ENCODE measurements at regions of chr7 and their contacts with region 1.

Region 1: DNA sequence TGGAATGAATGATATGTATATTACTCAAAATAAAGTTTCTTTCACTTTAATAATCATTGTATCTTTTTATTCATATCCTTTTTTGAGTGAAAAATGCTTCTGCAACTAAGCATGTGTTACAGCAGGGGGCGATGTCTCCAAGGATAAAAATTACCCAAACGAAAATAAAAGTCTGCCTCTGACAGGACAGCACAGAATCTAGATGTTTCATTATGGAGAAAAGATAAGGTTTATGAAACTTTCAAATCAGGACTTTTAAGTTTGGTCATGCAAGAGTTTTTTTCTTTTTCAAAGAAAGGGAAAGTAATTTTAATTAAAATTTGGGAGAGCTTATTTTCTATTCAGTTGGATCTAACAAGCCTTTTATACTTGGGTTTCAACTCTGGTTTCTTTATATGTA is 48.4 kb downstream of the TES start:
- DNase-seq: peak; percentile 85
- H3K4me3 ChIP-seq: no peak overlapping the region
- H3K27ac ChIP-seq: peak overlapping the region; percentile 32
- H3K4me1 ChIP-seq: peaks cover 28% of the 10 kb centered on the region
- H3K27me3 ChIP-seq: no peaks in the 10 kb centered on the region
- CTCF ChIP-seq: peak; percentile 43 to 48
- POLR2A ChIP-seq: peak; percentile 22

Region 2: GRCh38 chr7:116271963-116272839 is 13.5 kb after region 1 on chr7:
- CTCF ChIA-PET with region 1: interaction called, 18 read pairs
- POLR2A ChIA-PET with region 1: no interaction called
- dilution Hi-C with region 1: no loop called
- intact Hi-C with region 1: no loop called
- DNase-seq: peak; percentile 94
- H3K4me3 ChIP-seq: peak overlapping the region in 1 of 3 experiments; percentile 48
- H3K27ac ChIP-seq: peak overlapping the region; percentile 90
- H3K4me1 ChIP-seq: peaks cover 57% of the 10 kb centered on the region
- H3K27me3 ChIP-seq: no peaks in the 10 kb centered on the region
- CTCF ChIP-seq: no peak
- POLR2A ChIP-seq: no peak

Region 3: GRCh38 chr7:116327752-116328151 is 69.0 kb after region 1 on chr7:
- CTCF ChIA-PET with region 1: interaction called, 7 read pairs
- POLR2A ChIA-PET with region 1: no interaction called
- dilution Hi-C with region 1: no loop called
- intact Hi-C with region 1: loop called (anchors 1 kb)
- DNase-seq: peak; percentile 97
- H3K4me3 ChIP-seq: peak overlapping the region; percentile 43 to 99 (median 98)
- H3K27ac ChIP-seq: peak overlapping the region; percentile 97
- H3K4me1 ChIP-seq: peaks cover 48% of the 10 kb centered on the region
- H3K27me3 ChIP-seq: no peaks in the 10 kb centered on the region
- CTCF ChIP-seq: no peak
- POLR2A ChIP-seq: peak; percentile 97

Region 4: GRCh38 chr7:116443101-116443523 is 184.4 kb after region 1 on chr7:
- CTCF ChIA-PET with region 1: interaction called, 4 read pairs
- POLR2A ChIA-PET with region 1: interaction called, 5 read pairs
- dilution Hi-C with region 1: no loop called
- intact Hi-C with region 1: loop called (anchors 1 kb)
- DNase-seq: peak; percentile 91
- H3K4me3 ChIP-seq: no peak overlapping the region
- H3K27ac ChIP-seq: peak overlapping the region; percentile 93
- H3K4me1 ChIP-seq: peaks cover 35% of the 10 kb centered on the region
- H3K27me3 ChIP-seq: no peaks in the 10 kb centered on the region
- CTCF ChIP-seq: no peak
- POLR2A ChIP-seq: peak; percentile 50

Region 5: GRCh38 chr7:116511552-116512519 is 253.1 kb after region 1 on chr7:
- CTCF ChIA-PET with region 1: interaction called, 5 read pairs
- POLR2A ChIA-PET with region 1: no interaction called
- dilution Hi-C with region 1: loop called (anchors 25 kb)
- intact Hi-C with region 1: loop called (anchors 1 kb)
- DNase-seq: peak; percentile 96
- H3K4me3 ChIP-seq: peak overlapping the region; percentile 32 to 70 (median 45)
- H3K27ac ChIP-seq: peak overlapping the region; percentile 96
- H3K4me1 ChIP-seq: peaks cover 54% of the 10 kb centered on the region
- H3K27me3 ChIP-seq: no peaks in the 10 kb centered on the region
- CTCF ChIP-seq: no peak
- POLR2A ChIP-seq: peak; percentile 76

Region 6: GRCh38 chr7:116809636-116810266 is 551.0 kb after region 1 on chr7:
- CTCF ChIA-PET with region 1: no interaction called
- POLR2A ChIA-PET with region 1: no interaction called
- dilution Hi-C with region 1: no loop called
- intact Hi-C with region 1: loop called (anchors 1 kb)
- DNase-seq: peak; percentile 86
- H3K4me3 ChIP-seq: no peak overlapping the region
- H3K27ac ChIP-seq: no peak overlapping the region
- H3K4me1 ChIP-seq: peaks cover 19% of the 10 kb centered on the region
- H3K27me3 ChIP-seq: no peaks in the 10 kb centered on the region
- CTCF ChIP-seq: peak; percentile 25 to 43
- POLR2A ChIP-seq: no peak

Measured in endothelial cell of umbilical vein (primary cell).